CD4-positive, alpha-beta T cell (primary cell): ENCODE measurements at regions of chr3 and their contacts with region 1.

Region 1: DNA sequence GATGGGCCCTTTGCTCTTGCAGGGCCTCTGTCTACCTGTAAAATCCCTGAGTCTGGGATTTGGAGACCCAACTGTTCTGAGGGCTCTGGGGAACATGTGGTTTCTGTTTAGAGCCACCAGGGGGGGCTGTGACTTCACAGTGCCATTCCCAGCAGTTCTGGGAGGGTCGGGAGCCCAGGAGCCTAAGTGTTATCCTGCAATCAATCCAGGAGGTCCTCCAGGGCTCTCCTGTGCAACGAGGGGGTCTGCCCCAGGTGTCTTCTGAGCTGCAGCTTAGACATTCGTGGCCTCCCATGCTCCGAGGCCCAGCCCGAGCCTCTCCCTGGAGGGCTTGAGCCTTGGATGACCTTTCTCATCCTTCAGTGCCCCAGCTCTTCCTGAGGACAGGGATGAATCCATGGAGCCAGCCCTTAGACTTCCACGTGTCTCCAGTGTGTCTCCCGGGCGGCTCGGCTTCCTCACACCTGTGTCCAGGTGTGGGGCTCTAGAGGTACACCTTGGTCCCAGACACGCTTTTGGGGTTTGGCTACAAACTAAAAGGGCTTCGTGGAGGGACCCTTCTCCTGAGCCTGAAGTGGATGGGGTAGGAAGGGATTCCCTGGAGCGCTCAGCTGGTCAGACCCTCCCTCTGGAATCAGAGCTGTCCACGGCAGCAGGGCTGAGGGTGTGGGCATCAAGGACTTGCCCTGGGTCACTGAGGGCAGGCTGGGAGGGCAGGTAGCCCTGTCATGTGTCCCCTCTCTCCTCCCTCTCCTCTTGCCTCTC is 20.3 kb upstream of the ABTB1 start:
- DNase-seq: peak in 6 of 14 experiments; percentile 16 to 74 (median 44)
- ATAC-seq: peak; percentile 61
- H3K4me3 ChIP-seq: no peak overlapping the region
- H3K4me3 Mint-ChIP-seq: no peak overlapping the region
- H3K27ac ChIP-seq: no peak overlapping the region
- H3K27ac Mint-ChIP-seq: no peak overlapping the region
- H3K4me1 ChIP-seq: peaks cover 4% of the 10 kb centered on the region
- H3K4me1 Mint-ChIP-seq: no peaks in the 10 kb centered on the region
- H3K27me3 ChIP-seq: no peaks in the 10 kb centered on the region
- H3K27me3 Mint-ChIP-seq: no peaks in the 10 kb centered on the region
- CTCF ChIP-seq: peak; percentile 83

Region 2: GRCh38 chr3:127697551-127698240 is 45.3 kb after region 1 on chr3:
- CTCF ChIA-PET with region 1: interaction called, 3 read pairs
- POLR2A ChIA-PET with region 1: no interaction called
- intact Hi-C with region 1: loop called (anchors 1 kb)
- DNase-seq: peak in 8 of 14 experiments; percentile 25 to 74 (median 44)
- ATAC-seq: peak; percentile 76
- H3K4me3 ChIP-seq: no peak overlapping the region
- H3K4me3 Mint-ChIP-seq: peak overlapping the region; percentile 11
- H3K27ac ChIP-seq: no peak overlapping the region
- H3K27ac Mint-ChIP-seq: no peak overlapping the region
- H3K4me1 ChIP-seq: peaks cover 13% of the 10 kb centered on the region
- H3K4me1 Mint-ChIP-seq: peaks cover 5% of the 10 kb centered on the region
- H3K27me3 ChIP-seq: no peaks in the 10 kb centered on the region
- H3K27me3 Mint-ChIP-seq: no peaks in the 10 kb centered on the region
- CTCF ChIP-seq: no peak

Region 3: GRCh38 chr3:127831723-127832172 is 179.3 kb after region 1 on chr3:
- CTCF ChIA-PET with region 1: no interaction called
- POLR2A ChIA-PET with region 1: no interaction called
- intact Hi-C with region 1: loop called in 1 of 2 experiments (anchors 5 kb)
- DNase-seq: peak in 4 of 14 experiments; percentile 14 to 45 (median 30)
- ATAC-seq: no peak
- H3K4me3 ChIP-seq: no peak overlapping the region
- H3K4me3 Mint-ChIP-seq: no peak overlapping the region
- H3K27ac ChIP-seq: no peak overlapping the region
- H3K27ac Mint-ChIP-seq: no peak overlapping the region
- H3K4me1 ChIP-seq: no peaks in the 10 kb centered on the region
- H3K4me1 Mint-ChIP-seq: no peaks in the 10 kb centered on the region
- H3K27me3 ChIP-seq: peaks cover 0 to 2% of the 10 kb centered on the region in 2 experiments
- H3K27me3 Mint-ChIP-seq: peaks cover 20% of the 10 kb centered on the region
- CTCF ChIP-seq: no peak

Region 4: GRCh38 chr3:127970966-127971592 is 318.7 kb after region 1 on chr3:
- CTCF ChIA-PET with region 1: no interaction called
- POLR2A ChIA-PET with region 1: no interaction called
- intact Hi-C with region 1: loop called in 1 of 2 experiments (anchors 1 kb)
- DNase-seq: peak in 5 of 14 experiments; percentile 1 to 53 (median 29)
- ATAC-seq: no peak
- H3K4me3 ChIP-seq: no peak overlapping the region
- H3K4me3 Mint-ChIP-seq: no peak overlapping the region
- H3K27ac ChIP-seq: no peak overlapping the region
- H3K27ac Mint-ChIP-seq: no peak overlapping the region
- H3K4me1 ChIP-seq: no peaks in the 10 kb centered on the region
- H3K4me1 Mint-ChIP-seq: no peaks in the 10 kb centered on the region
- H3K27me3 ChIP-seq: peaks cover 4 to 11% of the 10 kb centered on the region in 2 experiments
- H3K27me3 Mint-ChIP-seq: peaks cover 15% of the 10 kb centered on the region
- CTCF ChIP-seq: peak; percentile 56